HCT116 (cell line): ENCODE measurements at regions of chr12 and their contacts with region 1.

Region 1: DNA sequence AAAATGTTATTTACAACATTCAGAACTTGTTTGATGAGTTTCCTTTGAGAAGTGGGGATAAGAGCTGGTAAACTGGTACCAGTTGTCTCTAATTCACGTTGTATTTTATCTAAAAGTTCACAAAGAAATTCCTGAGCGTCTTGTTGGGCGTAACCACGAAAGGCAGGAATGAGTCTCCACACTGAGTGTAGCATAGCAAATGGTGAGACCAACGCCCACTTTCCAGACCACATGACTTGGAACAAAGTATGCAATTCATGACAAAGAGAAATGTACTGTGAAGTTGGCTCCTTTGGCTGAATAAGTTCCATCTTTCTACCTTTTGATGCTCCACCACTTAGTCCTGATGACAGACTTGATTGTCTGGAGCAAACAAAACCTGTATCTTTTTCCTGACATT is 18.4 kb downstream of the USP44 start:
- DNase-seq: no peak
- ATAC-seq: no peak
- H3K4me3 ChIP-seq: no peak overlapping the region
- H3K27ac ChIP-seq: no peak overlapping the region
- H3K4me1 ChIP-seq: peaks cover 0 to 5% of the 10 kb centered on the region in 2 experiments; a peak in 1 of 4 replicates
- H3K27me3 ChIP-seq: no peaks in the 10 kb centered on the region
- CTCF ChIP-seq: no peak
- POLR2A ChIP-seq: no peak
- RAD21 ChIP-seq: no peak

Region 2: DNA sequence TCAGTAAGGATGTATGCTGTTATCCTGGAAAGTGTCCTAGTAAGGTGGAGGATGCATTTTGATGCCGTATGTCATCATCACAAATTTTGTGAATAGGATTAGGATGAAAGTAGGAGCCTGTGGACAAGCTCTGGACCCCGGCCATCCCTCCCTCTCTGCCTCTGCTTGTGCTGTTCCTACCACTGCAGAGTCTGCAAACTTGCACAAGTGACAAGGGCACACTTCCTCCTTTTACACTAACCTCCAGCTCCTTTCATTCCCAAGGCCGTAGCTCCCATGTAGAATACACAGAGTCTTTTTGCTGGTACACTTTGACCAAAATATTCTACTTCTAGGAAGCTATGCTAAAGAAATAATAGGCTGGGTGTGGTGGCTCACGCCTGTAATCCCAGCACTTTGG is 869.1 kb before region 1 on chr12:
- CTCF ChIA-PET with region 1: no interaction called
- POLR2A ChIA-PET with region 1: no interaction called
- RAD21 ChIA-PET with region 1: no interaction called
- intact Hi-C with region 1: no loop called
- DNase-seq: no peak
- ATAC-seq: no peak
- H3K4me3 ChIP-seq: no peak overlapping the region
- H3K27ac ChIP-seq: no peak overlapping the region
- H3K4me1 ChIP-seq: no peaks in the 10 kb centered on the region
- H3K27me3 ChIP-seq: no peaks in the 10 kb centered on the region
- CTCF ChIP-seq: no peak
- POLR2A ChIP-seq: no peak
- RAD21 ChIP-seq: no peak

Region 3: GRCh38 chr12:94875525-94875924 is 657.3 kb before region 1 on chr12:
- CTCF ChIA-PET with region 1: no interaction called
- POLR2A ChIA-PET with region 1: no interaction called
- RAD21 ChIA-PET with region 1: no interaction called
- intact Hi-C with region 1: loop called (anchors 10 kb)
- DNase-seq: peak; percentile 65
- ATAC-seq: peak; percentile 68
- H3K4me3 ChIP-seq: no peak overlapping the region
- H3K27ac ChIP-seq: no peak overlapping the region
- H3K4me1 ChIP-seq: peaks cover 19 to 26% of the 10 kb centered on the region in 2 experiments; a peak in 3 of 4 replicates
- H3K27me3 ChIP-seq: no peaks in the 10 kb centered on the region
- CTCF ChIP-seq: peak; percentile 38 to 74 (median 68)
- POLR2A ChIP-seq: no peak
- RAD21 ChIP-seq: peak; percentile 89

Region 4: DNA sequence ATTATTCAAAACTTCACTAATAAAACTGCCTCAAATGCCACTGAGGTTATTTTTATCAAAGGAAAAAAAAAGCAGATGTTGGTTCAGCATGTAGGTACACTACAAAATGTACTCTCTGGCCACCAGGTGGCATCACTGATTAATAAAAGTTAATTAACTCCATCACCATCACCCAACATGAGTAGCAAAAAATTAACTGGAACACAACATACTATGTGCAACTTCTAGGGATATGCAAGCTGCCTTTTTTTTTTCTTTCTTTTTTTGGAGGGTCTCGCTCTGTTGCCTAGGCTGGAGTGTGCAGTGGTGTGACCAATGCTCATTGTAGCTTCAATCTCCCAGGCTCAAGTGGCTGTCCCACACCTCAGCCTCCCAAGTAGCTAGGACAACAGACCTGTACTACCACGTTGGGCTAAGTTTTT is 415.7 kb before region 1 on chr12:
- CTCF ChIA-PET with region 1: interaction called, 38 read pairs
- POLR2A ChIA-PET with region 1: interaction called, 6 read pairs
- RAD21 ChIA-PET with region 1: interaction called, 7 to 12 read pairs
- intact Hi-C with region 1: loop called (anchors 1 kb)
- DNase-seq: peak; percentile 64
- ATAC-seq: peak; percentile 80
- H3K4me3 ChIP-seq: peak overlapping the region in 1 of 2 experiments; percentile 23; a peak in 2 of 4 replicates
- H3K27ac ChIP-seq: peak overlapping the region; percentile 5; the same call in 1 of the 2 replicates
- H3K4me1 ChIP-seq: peaks cover 9 to 49% of the 10 kb centered on the region in 2 experiments
- H3K27me3 ChIP-seq: no peaks in the 10 kb centered on the region
- CTCF ChIP-seq: peak; percentile 47 to 91 (median 83)
- POLR2A ChIP-seq: no peak
- RAD21 ChIP-seq: peak; percentile 93

Region 5: DNA sequence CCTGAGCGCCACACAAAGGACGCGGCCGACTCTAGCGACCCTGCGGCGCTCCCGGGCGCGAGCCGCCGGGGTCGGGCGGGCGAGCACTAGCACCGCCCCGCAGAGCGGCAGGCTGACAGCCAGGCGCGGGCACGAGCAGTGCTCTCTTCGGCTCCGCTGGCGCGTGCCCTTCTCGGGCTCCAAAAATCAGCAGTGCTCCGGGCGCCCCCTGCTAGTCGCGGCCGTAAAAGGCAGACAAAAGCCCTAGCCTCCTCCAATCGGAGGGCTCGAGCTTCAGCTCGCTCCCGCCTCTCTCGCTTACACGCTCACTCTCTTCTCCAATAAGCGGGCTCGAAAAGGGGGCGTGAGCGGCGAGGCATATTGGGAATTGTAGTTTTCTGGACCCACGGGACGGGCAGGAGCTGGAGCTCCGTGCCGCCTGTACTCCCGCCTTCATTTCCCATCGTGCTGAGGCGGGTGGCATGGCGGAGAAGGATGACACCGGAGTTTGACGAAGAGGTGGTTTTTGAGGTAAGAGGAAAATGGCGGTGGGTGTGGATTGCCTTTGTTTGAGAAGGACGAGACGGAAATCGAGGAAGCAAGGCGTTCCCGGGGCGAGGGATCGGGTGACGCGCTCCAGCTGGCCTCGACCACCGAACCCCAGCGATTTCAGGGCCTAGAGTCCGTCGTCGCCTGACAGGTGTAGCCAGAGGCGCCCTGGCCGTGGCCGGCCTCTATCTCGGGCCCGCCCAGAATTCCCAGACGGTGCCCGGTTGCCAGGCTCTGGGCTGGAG is 315.3 kb before region 1 on chr12 and contains the starts of genes FGD6 and VEZT:
- CTCF ChIA-PET with region 1: interaction called, 5 read pairs
- POLR2A ChIA-PET with region 1: no interaction called
- RAD21 ChIA-PET with region 1: interaction called in 1 of 2 experiments, 5 read pairs
- intact Hi-C with region 1: loop called (anchors 1 kb)
- DNase-seq: peak; percentile 98
- ATAC-seq: peak; percentile 87
- H3K4me3 ChIP-seq: peak within 1 kb of the TSS; percentile 73 to 83
- H3K27ac ChIP-seq: peak within 1 kb of the TSS; percentile 79
- H3K4me1 ChIP-seq: peaks cover 3 to 27% of the 10 kb centered on the region in 2 experiments; a peak in 2 of 4 replicates
- H3K27me3 ChIP-seq: no peaks in the 10 kb centered on the region
- CTCF ChIP-seq: peak; percentile 49 to 77 (median 57); a peak in 5 of 6 replicates
- POLR2A ChIP-seq: no peak
- RAD21 ChIP-seq: peak; percentile 97
- total RNA-seq, gene FGD6: 18.2 TPM
- total RNA-seq, gene VEZT: 46.4 TPM

Region 6: DNA sequence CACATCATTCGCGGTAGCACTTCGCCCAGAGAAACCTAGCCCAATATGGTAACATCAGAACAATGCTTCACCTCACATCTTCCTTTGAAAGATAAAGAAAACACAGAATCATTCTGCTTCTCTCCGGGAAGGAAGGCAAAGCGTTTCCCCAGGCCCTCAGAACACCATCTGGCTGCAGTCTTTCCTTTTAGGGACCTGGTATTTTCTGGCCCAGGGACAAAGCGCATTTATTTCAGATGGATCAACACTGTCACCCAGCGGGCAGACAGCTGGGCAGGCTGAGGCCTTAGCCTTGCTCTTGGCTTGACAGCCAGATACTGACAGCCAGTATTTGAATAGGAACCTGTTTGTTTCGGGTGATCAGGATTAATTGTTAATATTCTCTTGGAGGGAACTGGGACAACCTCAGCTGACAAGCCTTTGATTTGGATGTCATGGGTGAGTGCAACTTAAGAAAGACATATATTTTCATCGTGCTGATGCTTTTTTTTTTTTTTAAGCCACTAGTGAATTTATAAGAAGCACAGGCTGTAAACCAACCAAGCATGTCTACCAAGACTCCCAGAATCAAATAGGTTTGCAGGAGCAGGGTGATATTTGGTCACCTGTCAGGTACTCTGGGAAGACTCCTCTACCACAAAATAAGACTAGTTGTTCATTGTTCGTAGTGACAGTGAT is 196.3 kb before region 1 on chr12:
- CTCF ChIA-PET with region 1: interaction called, 16 read pairs
- POLR2A ChIA-PET with region 1: no interaction called
- RAD21 ChIA-PET with region 1: interaction called in 1 of 2 experiments, 4 read pairs
- intact Hi-C with region 1: loop called (anchors 5 kb)
- DNase-seq: peak; percentile 65
- ATAC-seq: peak; percentile 57
- H3K4me3 ChIP-seq: no peak overlapping the region
- H3K27ac ChIP-seq: no peak overlapping the region
- H3K4me1 ChIP-seq: peaks cover 16 to 59% of the 10 kb centered on the region in 2 experiments
- H3K27me3 ChIP-seq: no peaks in the 10 kb centered on the region
- CTCF ChIP-seq: peak; percentile 82 to 91 (median 83)
- POLR2A ChIP-seq: no peak
- RAD21 ChIP-seq: peak; percentile 97

Region 7: DNA sequence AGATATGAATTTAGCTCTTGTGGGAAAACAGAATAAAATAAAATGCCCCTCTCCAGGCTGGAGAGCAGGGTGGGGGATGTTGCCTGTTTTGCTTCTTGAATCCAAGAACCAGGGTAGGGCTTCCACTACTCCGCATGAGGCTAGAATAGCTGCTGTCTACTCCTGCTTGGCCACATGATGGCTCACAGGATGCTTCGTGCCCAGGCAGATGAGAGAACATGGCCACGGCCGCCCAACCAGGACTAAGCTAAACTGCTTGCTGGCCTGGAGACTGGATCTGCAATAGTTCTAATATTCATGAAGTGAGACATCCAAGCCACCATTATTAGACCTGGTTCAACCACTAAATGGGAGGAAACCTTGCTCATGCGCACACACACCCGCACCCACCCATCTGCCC is 181.1 kb before region 1 on chr12:
- CTCF ChIA-PET with region 1: interaction called, 5 read pairs
- POLR2A ChIA-PET with region 1: no interaction called
- RAD21 ChIA-PET with region 1: no interaction called
- intact Hi-C with region 1: loop called (anchors 5 kb)
- DNase-seq: no peak
- ATAC-seq: no peak
- H3K4me3 ChIP-seq: no peak overlapping the region
- H3K27ac ChIP-seq: no peak overlapping the region
- H3K4me1 ChIP-seq: no peaks in the 10 kb centered on the region
- H3K27me3 ChIP-seq: no peaks in the 10 kb centered on the region
- CTCF ChIP-seq: no peak
- POLR2A ChIP-seq: no peak
- RAD21 ChIP-seq: no peak

Region 8: DNA sequence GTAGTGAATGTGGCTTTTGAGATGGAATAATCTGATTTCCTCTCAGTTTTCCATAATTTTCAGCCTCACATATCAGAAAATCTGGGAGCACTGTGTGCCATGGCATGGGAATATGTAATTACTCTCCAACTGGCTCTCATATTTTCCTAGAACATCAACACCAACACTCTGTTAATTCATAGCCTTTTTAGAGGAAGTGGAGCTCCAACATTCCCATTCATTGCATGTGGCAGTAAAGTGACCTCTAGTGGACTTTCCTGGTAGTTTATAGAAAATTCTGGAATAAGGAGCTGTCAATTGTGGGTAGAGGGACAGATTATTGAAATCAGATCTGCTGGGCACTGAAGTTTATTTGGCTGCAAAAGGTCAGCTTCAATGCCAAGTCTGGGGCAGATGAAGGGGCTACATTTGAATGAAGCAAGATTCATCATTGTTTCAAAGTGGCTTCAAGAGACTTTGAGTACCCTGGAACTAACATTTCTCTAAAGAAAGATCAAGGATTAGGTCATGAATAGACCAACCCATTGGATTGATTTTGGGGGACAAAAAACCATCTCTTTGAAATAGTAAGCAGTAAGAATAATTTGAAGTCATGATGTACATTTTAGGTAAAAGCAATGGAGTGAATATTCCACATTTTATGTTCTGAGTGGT is 42.1 kb after region 1 on chr12:
- CTCF ChIA-PET with region 1: interaction called, 21 read pairs
- POLR2A ChIA-PET with region 1: no interaction called
- RAD21 ChIA-PET with region 1: no interaction called
- intact Hi-C with region 1: no loop called
- DNase-seq: peak; percentile 49
- ATAC-seq: peak; percentile 83
- H3K4me3 ChIP-seq: no peak overlapping the region
- H3K27ac ChIP-seq: no peak overlapping the region
- H3K4me1 ChIP-seq: peaks cover 0 to 4% of the 10 kb centered on the region in 2 experiments; a peak in 1 of 4 replicates
- H3K27me3 ChIP-seq: no peaks in the 10 kb centered on the region
- CTCF ChIP-seq: peak; percentile 68 to 79 (median 70)
- POLR2A ChIP-seq: no peak
- RAD21 ChIP-seq: peak; percentile 78